ENCODE measurements at regions of chr1 and their contacts with region 1.

Region 1: GRCh38 chr1:44500181-44501046 is 95.4 kb downstream of the RNF220 start:
- DNase-seq: no peak
- ATAC-seq: no peak
- H3K4me3 ChIP-seq: no peak overlapping the region
- H3K27ac ChIP-seq: no peak overlapping the region
- H3K4me1 ChIP-seq: no peaks in the 10 kb centered on the region
- H3K27me3 ChIP-seq: peaks cover 0 to 14% (median 4%) of the 10 kb centered on the region in 3 donors
- CTCF ChIP-seq: peak in 2 of 5 experiments; percentile 40 to 42
- POLR2A ChIP-seq: no peak

Region 2: DNA sequence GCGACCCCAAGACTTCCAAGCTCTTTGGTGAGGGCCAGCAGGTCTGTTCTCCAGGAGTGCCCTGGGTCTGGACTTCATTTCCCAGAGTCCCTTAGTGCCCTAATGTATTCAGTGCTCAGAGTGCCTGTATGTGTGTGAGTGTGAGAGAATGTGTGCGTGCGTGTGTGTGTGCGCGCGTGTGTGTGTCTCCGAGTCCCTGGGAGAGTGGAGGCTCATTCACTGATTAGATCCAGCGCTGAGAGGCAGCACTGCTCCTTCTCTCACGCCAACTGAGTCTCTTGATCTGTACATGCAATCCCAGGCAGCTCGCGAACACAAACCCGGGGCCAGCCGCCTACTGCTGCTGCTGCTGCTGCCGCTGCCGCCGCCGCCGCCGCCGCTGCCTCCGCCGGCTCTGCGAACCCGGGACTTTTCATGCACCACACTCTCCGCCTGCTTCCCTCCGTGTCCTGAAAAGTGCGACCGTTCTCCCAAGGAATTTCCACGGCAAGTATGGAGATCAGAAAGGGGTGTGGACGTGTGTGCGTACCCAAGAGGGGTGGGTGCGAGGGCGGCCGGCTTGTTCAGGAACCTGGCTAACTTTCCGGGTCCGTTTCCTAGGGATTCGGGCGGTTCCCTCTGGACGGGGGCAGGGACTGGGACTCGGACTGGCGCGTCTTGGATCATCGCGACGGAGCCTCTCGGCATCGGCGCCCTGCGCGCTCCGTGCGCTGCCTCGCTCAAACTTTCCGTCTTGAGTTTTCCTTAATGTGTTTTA is 95.2 kb before region 1 on chr1 and contains the start of gene RNF220:
- in situ Hi-C with region 1: no loop called
- intact Hi-C with region 1: loop called (anchors 10 kb)
- DNase-seq: no peak
- ATAC-seq: peak; percentile 33 to 42
- H3K4me3 ChIP-seq: peak within 1 kb of the TSS; percentile 43 to 64 (median 56)
- H3K27ac ChIP-seq: peak within 1 kb of the TSS in 3 of 4 donors; percentile 57 to 62 (median 61)
- H3K4me1 ChIP-seq: peaks cover 18 to 21% of the 10 kb centered on the region in 2 donors
- H3K27me3 ChIP-seq: peaks cover 83 to 94% (median 84%) of the 10 kb centered on the region in 3 donors
- CTCF ChIP-seq: no peak
- POLR2A ChIP-seq: no peak
- total RNA-seq, gene RNF220: 91.2 to 172 (median 128) TPM